B cell (primary cell): ENCODE measurements at regions of chr6 and their contacts with region 1.

Region 1: DNA sequence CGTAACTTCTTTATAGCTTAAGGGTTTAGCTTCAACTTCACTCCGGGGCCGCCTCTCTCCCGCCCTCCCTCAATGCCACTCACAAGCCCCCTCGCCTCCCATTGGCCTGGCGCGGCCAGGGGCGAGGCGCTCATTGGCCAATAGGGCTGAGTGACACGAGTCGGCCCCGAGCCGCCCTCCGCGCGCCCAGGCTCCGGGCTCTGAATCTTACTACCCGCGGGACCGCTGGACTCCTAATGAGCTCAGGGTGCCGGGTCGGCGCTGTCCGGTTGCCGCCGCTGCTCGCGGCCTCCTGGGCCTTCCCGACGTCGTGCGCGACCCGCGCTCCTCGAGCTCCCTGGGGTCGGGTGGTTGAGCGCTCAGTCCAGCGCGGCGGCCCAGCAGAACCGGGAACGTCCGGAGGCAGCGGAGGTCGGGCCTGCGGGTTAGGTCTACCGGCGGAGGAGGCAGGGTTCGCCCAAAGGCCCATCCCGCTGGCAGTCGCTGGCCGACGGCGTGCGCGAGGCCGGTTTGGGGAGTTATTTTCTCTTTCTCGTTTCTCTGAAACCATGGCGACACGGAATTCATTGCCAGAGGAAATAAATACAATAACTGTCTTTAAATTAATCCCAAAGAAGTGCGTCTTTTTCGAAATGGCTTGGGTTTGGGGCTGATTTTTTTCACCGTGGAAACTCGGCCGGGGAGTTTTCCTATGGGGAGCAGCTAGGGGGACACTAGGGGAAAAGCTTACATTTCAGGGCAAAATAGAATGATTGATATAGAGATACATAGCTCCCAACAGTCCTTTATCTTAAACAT is at the start of gene SIM1:
- DNase-seq: peak; percentile 50
- ATAC-seq: peak; percentile 24
- H3K4me3 ChIP-seq: peak within 1 kb of the TSS in 2 of 5 experiments; percentile 3 to 9
- H3K4me3 Mint-ChIP-seq: peak within 1 kb of the TSS; percentile 61
- H3K27ac ChIP-seq: no peak within 1 kb of the TSS
- H3K27ac Mint-ChIP-seq: peak within 1 kb of the TSS; percentile 46
- H3K4me1 ChIP-seq: peaks cover 25 to 46% of the 10 kb centered on the region in 2 donors
- H3K4me1 Mint-ChIP-seq: peaks cover 20% of the 10 kb centered on the region
- H3K27me3 ChIP-seq: peaks cover 1 to 92% (median 86%) of the 10 kb centered on the region in 4 experiments
- H3K27me3 Mint-ChIP-seq: peaks cover 73% of the 10 kb centered on the region
- CTCF ChIP-seq: no peak
- total RNA-seq, gene SIM1: not detected in 2 replicates

Region 2: DNA sequence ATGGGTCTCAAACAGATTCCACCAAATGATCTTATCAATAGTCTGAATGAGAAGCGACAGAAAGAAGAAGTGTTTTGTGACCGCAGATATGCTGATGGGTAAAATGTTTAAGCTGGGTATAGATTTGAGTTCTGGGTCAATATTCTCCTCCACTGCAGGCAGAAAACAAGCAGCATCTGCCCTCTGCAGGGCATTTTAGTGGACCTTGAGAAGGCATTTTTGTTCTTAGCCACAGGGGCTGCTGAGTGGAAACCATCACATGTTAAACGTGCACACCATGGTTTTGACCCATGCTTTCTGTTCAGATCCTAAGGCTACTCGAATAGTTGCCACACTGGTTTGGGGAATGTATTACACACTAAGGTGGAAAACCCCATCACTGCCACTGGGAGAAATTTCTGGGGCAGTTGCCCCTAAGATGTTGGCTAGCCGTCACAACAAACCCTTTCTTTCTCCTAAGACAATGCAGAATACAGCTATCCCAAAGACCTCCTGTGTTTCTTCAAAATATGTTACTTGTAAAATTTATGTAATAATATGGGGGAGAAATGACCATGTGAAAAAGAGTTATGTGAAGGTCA is 1625.2 kb before region 1 on chr6:
- CTCF ChIA-PET with region 1: no interaction called
- POLR2A ChIA-PET with region 1: no interaction called
- intact Hi-C with region 1: loop called (anchors 5 kb)
- DNase-seq: peak; percentile 12
- ATAC-seq: no peak
- H3K4me3 ChIP-seq: no peak overlapping the region
- H3K4me3 Mint-ChIP-seq: no peak overlapping the region
- H3K27ac ChIP-seq: no peak overlapping the region
- H3K27ac Mint-ChIP-seq: no peak overlapping the region
- H3K4me1 ChIP-seq: peaks cover 30 to 47% of the 10 kb centered on the region in 2 donors
- H3K4me1 Mint-ChIP-seq: peaks cover 27% of the 10 kb centered on the region
- H3K27me3 ChIP-seq: peaks cover 1 to 79% (median 74%) of the 10 kb centered on the region in 4 experiments
- H3K27me3 Mint-ChIP-seq: peaks cover 78% of the 10 kb centered on the region
- CTCF ChIP-seq: no peak

Region 3: GRCh38 chr6:100185615-100186014 is 279.5 kb before region 1 on chr6:
- CTCF ChIA-PET with region 1: no interaction called
- POLR2A ChIA-PET with region 1: no interaction called
- intact Hi-C with region 1: no loop called
- DNase-seq: no peak
- ATAC-seq: no peak
- H3K4me3 ChIP-seq: no peak overlapping the region
- H3K4me3 Mint-ChIP-seq: no peak overlapping the region
- H3K27ac ChIP-seq: no peak overlapping the region
- H3K27ac Mint-ChIP-seq: no peak overlapping the region
- H3K4me1 ChIP-seq: no peaks in the 10 kb centered on the region
- H3K4me1 Mint-ChIP-seq: no peaks in the 10 kb centered on the region
- H3K27me3 ChIP-seq: no peaks in the 10 kb centered on the region
- H3K27me3 Mint-ChIP-seq: peaks cover 4% of the 10 kb centered on the region
- CTCF ChIP-seq: no peak

Region 4: GRCh38 chr6:100300221-100300736 is 164.8 kb before region 1 on chr6:
- CTCF ChIA-PET with region 1: no interaction called
- POLR2A ChIA-PET with region 1: no interaction called
- intact Hi-C with region 1: no loop called
- DNase-seq: no peak
- ATAC-seq: no peak
- H3K4me3 ChIP-seq: no peak overlapping the region
- H3K4me3 Mint-ChIP-seq: no peak overlapping the region
- H3K27ac ChIP-seq: no peak overlapping the region
- H3K27ac Mint-ChIP-seq: no peak overlapping the region
- H3K4me1 ChIP-seq: no peaks in the 10 kb centered on the region
- H3K4me1 Mint-ChIP-seq: no peaks in the 10 kb centered on the region
- H3K27me3 ChIP-seq: no peaks in the 10 kb centered on the region
- H3K27me3 Mint-ChIP-seq: peaks cover 3% of the 10 kb centered on the region
- CTCF ChIP-seq: no peak